Activated naive CD4-positive, alpha-beta T cell treated with anti-CD3 and anti-CD28 coated beads, Interleukin-2, amount 10 ng/mL, durations not matched to agents 7 days and 5 days (primary cell): ENCODE measurements at regions of chr13 and their contacts with region 1.

Region 1: GRCh38 chr13:45623515-45624090 is 8.1 kb upstream of the ERICH6B start:
- DNase-seq: no peak
- H3K4me3 Mint-ChIP-seq: no peak overlapping the region
- H3K27ac Mint-ChIP-seq: no peak overlapping the region
- H3K4me1 Mint-ChIP-seq: no peaks in the 10 kb centered on the region
- H3K27me3 Mint-ChIP-seq: peaks cover 51% of the 10 kb centered on the region

Region 2: GRCh38 chr13:45718063-45718462 is 94.5 kb after region 1 on chr13:
- CTCF ChIA-PET with region 1: interaction called, 10 read pairs
- DNase-seq: no peak
- H3K4me3 Mint-ChIP-seq: no peak overlapping the region
- H3K27ac Mint-ChIP-seq: no peak overlapping the region
- H3K4me1 Mint-ChIP-seq: no peaks in the 10 kb centered on the region
- H3K27me3 Mint-ChIP-seq: no peaks in the 10 kb centered on the region

Region 3: DNA sequence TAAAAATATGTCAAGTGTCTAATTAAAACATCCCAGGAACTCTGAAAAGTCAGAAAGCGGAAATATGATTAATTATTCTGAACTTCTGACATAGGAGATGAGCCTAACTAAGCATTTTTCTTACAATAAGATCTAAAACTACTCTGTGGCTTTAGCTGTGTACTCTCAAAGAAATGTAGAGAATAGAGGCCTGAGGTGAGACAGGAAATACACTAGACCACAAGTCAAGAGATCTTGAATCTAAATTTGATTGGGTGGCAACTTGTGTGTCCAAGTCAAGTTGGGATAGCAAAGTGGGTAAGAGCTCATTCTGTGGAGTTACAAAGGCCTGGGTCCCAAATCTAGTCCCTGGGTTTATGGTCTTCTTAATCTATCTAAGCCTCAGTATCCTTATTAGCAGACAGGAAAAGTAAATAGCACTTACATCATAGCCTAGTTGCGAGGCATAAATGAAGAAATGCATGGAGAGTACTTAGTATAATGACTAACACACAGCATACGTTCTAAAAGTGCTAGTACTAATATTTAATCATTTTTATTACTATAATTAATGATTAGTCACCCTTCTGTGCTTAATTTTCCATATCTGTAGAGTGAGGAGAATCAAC is 578.7 kb after region 1 on chr13:
- CTCF ChIA-PET with region 1: no interaction called
- DNase-seq: no peak
- H3K4me3 Mint-ChIP-seq: peak overlapping the region; percentile 29
- H3K27ac Mint-ChIP-seq: peak overlapping the region; percentile 88
- H3K4me1 Mint-ChIP-seq: peaks cover 63% of the 10 kb centered on the region
- H3K27me3 Mint-ChIP-seq: no peaks in the 10 kb centered on the region